ENCODE measurements at regions of chr3 and their contacts with region 1.

Region 1: GRCh38 chr3:40524568-40525285 is at the start of gene ZNF621:
- DNase-seq: peak; percentile 97
- H3K4me3 Mint-ChIP-seq: peak within 1 kb of the TSS; percentile 92
- H3K27ac Mint-ChIP-seq: peak within 1 kb of the TSS; percentile 93
- H3K4me1 Mint-ChIP-seq: peaks cover 20% of the 10 kb centered on the region
- H3K27me3 Mint-ChIP-seq: no peaks in the 10 kb centered on the region
- total RNA-seq, gene ZNF621: 18.6 and 19.2 TPM in 2 replicates

Region 2: GRCh38 chr3:40309418-40309924 is 215.3 kb before region 1 on chr3 and contains the start of gene EIF1B:
- intact Hi-C with region 1: loop called (anchors 1 kb)
- DNase-seq: peak; percentile 100
- H3K4me3 Mint-ChIP-seq: peak within 1 kb of the TSS; percentile 100
- H3K27ac Mint-ChIP-seq: peak within 1 kb of the TSS; percentile 99
- H3K4me1 Mint-ChIP-seq: peaks cover 17% of the 10 kb centered on the region
- H3K27me3 Mint-ChIP-seq: no peaks in the 10 kb centered on the region
- total RNA-seq, gene EIF1B: 46.1 and 47.7 TPM in 2 replicates

Region 3: GRCh38 chr3:40337136-40338108 is 187.3 kb before region 1 on chr3:
- intact Hi-C with region 1: loop called (anchors 5 kb)
- DNase-seq: no peak
- H3K4me3 Mint-ChIP-seq: no peak overlapping the region
- H3K27ac Mint-ChIP-seq: peak overlapping the region; percentile 30
- H3K4me1 Mint-ChIP-seq: peaks cover 4% of the 10 kb centered on the region
- H3K27me3 Mint-ChIP-seq: peaks cover 7% of the 10 kb centered on the region

Region 4: GRCh38 chr3:40476478-40477470 is 48.0 kb before region 1 on chr3 and contains the start of gene ZNF619:
- intact Hi-C with region 1: loop called (anchors 1 kb)
- DNase-seq: peak; percentile 89
- H3K4me3 Mint-ChIP-seq: peak within 1 kb of the TSS; percentile 89
- H3K27ac Mint-ChIP-seq: peak within 1 kb of the TSS; percentile 83
- H3K4me1 Mint-ChIP-seq: peaks cover 20% of the 10 kb centered on the region
- H3K27me3 Mint-ChIP-seq: peaks cover 5% of the 10 kb centered on the region
- total RNA-seq, gene ZNF619: 6.1 and 8.4 TPM in 2 replicates

Region 5: DNA sequence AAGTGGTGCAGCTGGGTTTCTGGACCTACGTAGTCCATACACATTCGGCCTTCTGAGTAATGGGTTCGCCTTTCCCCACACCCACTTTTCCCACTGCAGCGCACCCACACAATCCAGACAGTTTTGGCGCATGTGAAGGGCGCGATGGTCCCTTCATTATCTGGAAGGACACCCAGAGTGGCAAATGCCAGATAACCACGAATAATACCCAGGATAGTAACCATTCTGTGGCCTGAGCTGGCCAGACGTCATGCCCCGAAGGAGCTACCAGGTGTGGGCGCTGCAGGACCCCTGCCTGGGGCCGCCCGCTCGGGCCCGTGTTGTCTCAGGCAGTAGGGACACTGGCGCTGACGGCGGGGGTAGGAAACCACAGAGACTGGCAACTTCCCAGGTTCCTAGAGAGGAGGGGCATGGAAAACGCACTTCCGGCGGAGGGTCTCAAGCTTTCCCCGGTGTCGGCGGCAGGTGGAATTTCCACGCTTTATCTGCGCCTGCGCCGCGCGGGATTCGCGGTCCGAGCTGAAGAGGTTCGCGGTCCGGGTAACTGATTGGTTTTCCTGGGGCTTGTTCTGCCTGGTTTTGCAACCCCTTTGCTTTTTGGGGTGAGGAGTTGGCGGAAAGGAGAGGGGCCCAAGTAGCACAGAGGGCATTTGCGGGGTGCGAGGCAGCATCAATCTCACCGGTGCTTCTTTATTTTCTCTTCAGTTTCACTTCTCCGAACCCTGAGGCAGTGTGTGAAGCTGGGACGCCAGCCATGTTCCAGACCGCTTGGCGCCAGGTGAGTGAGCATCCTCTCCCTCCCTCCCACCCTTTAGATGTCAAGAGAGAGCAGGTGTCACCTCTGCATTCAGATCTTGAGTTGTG is 18.9 kb before region 1 on chr3 and contains the start of gene ZNF620:
- intact Hi-C with region 1: loop called (anchors 2 kb)
- DNase-seq: peak; percentile 82
- H3K4me3 Mint-ChIP-seq: peak within 1 kb of the TSS; percentile 94
- H3K27ac Mint-ChIP-seq: peak within 1 kb of the TSS; percentile 82
- H3K4me1 Mint-ChIP-seq: peaks cover 17% of the 10 kb centered on the region
- H3K27me3 Mint-ChIP-seq: peaks cover 2% of the 10 kb centered on the region
- total RNA-seq, gene ZNF620: 4.9 and 5.6 TPM in 2 replicates

Region 6: GRCh38 chr3:40637891-40638290 is 113.2 kb after region 1 on chr3:
- intact Hi-C with region 1: no loop called
- DNase-seq: no peak
- H3K4me3 Mint-ChIP-seq: no peak overlapping the region
- H3K27ac Mint-ChIP-seq: no peak overlapping the region
- H3K4me1 Mint-ChIP-seq: no peaks in the 10 kb centered on the region
- H3K27me3 Mint-ChIP-seq: peaks cover 3% of the 10 kb centered on the region

Region 7: DNA sequence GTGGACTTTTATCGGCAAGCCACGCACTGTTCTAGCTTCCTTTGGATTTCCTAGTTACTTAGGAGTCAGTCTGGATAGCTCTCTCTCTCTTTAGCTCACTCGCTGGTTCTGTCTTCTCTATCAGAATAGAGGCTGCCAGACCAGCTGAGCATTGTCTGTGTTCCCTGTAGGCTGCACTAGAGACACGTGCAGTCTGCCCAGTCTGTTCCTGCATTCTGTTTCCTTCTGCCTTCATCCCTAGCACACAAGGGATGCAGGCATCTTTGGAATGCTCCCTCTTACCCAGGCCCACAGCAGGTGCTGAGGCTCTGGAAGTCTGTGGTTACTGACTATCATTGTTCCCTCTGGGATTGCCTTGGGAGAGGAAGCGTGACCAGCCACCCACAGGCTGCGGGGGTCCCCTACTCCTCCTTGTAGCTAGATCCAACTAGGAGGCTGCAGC is 322.8 kb after region 1 on chr3:
- intact Hi-C with region 1: no loop called
- DNase-seq: no peak
- H3K4me3 Mint-ChIP-seq: no peak overlapping the region
- H3K27ac Mint-ChIP-seq: no peak overlapping the region
- H3K4me1 Mint-ChIP-seq: no peaks in the 10 kb centered on the region
- H3K27me3 Mint-ChIP-seq: no peaks in the 10 kb centered on the region

Measured in activated CD4-positive, alpha-beta T cell treated with anti-CD3 and anti-CD28 coated beads, Interleukin-2, amount 10 ng/mL, durations not matched to agents 24 days and 14 days (primary cell).